ENCODE measurements at regions of chr18 and their contacts with region 1.

Region 1: DNA sequence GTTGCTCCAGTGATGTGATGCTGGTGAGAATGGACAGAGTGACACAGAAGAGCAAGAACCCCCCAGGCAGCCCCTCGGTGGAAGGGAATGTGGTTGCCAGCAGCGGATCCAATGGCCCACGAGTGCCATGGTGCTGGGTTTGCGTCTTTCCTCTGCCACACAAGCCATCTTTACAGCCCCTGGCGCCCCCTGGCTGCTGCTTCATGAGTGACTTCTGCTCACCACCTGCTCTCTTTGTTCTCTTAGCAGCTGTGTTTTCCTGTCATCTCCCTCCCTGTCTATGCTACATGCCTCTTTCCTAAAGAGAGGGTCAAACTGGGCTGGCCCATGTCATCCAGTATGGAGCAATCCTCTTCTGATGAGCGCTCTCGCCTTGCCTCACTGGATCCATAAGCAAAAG is 300.0 kb upstream of the SMIM21 start:
- DNase-seq: peak in 4 of 5 donors; percentile 20 to 68 (median 39)
- ATAC-seq: peak in 2 of 4 donors; percentile 62 to 63
- H3K4me3 ChIP-seq: no peak overlapping the region
- H3K27ac ChIP-seq: no peak overlapping the region
- H3K4me1 ChIP-seq: no peaks in the 10 kb centered on the region
- H3K27me3 ChIP-seq: peaks cover 0 to 19% (median 0%) of the 10 kb centered on the region in 9 donors
- CTCF ChIP-seq: peak; percentile 2 to 61 (median 44)
- POLR2A ChIP-seq: no peak

Region 2: DNA sequence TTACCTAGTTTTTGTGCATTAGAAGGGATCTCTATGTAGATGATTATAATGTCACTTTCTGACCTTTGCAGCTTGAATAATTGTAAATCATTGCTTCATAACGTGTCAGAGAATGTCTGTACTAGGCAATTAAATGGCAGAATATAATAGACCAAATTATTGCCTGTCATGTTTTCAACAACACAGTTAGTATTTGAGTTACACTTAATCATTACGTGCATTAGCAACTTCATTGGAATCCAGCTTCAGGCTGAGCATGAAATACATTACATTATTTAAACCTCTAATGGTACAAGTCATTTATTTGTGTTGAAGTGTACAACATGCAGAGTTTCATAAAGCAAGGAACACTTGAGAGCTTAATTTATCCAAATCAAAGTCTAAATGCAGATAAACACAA is 1081.8 kb before region 1 on chr18:
- intact Hi-C with region 1: loop called in 3 of 10 experiments (anchors 10 kb)
- DNase-seq: no peak
- ATAC-seq: no peak
- H3K4me3 ChIP-seq: no peak overlapping the region
- H3K27ac ChIP-seq: no peak overlapping the region
- H3K4me1 ChIP-seq: no peaks in the 10 kb centered on the region
- H3K27me3 ChIP-seq: no peaks in the 10 kb centered on the region
- CTCF ChIP-seq: no peak
- POLR2A ChIP-seq: no peak

Region 3: DNA sequence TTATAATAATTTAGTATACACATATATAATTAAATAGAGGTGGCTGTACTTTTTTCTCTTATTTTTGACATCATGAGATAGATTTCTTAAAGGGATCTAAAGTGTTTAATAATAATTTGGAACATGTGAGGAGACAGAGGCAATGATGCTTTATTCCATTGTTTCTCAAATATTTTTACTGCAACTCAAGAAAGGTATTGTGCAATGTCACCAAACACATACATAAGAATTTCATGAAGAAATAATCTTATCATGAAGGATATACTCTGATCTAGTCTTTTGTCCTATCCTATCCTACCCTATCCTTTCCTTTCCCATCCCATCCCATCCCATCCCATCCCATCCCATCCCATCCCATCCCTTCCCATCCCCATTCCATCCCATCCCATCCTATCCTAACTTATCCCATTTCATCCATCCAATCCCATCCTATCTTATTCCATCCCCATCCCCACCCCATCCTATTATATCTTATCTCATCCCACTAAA is 67.9 kb before region 1 on chr18:
- intact Hi-C with region 1: loop called in 1 of 10 experiments (anchors 10 kb)
- DNase-seq: no peak
- ATAC-seq: no peak
- H3K4me3 ChIP-seq: no peak overlapping the region
- H3K27ac ChIP-seq: no peak overlapping the region
- H3K4me1 ChIP-seq: no peaks in the 10 kb centered on the region
- H3K27me3 ChIP-seq: no peaks in the 10 kb centered on the region
- CTCF ChIP-seq: no peak
- POLR2A ChIP-seq: no peak

Region 4: GRCh38 chr18:75691483-75691882 is 36.0 kb before region 1 on chr18:
- intact Hi-C with region 1: no loop called
- DNase-seq: no peak
- ATAC-seq: no peak
- H3K4me3 ChIP-seq: no peak overlapping the region
- H3K27ac ChIP-seq: no peak overlapping the region
- H3K4me1 ChIP-seq: no peaks in the 10 kb centered on the region
- H3K27me3 ChIP-seq: peaks cover 0 to 6% (median 0%) of the 10 kb centered on the region in 9 donors
- CTCF ChIP-seq: no peak
- POLR2A ChIP-seq: no peak